Sciatic nerve (tissue), 2 donors: ENCODE measurements at regions of chr17 and their contacts with region 1.

Region 1: GRCh38 chr17:10327640-10328039 is 45.2 kb downstream of the MYH13 start:
- DNase-seq: peak; percentile 89
- ATAC-seq: peak; percentile 71

Region 2: DNA sequence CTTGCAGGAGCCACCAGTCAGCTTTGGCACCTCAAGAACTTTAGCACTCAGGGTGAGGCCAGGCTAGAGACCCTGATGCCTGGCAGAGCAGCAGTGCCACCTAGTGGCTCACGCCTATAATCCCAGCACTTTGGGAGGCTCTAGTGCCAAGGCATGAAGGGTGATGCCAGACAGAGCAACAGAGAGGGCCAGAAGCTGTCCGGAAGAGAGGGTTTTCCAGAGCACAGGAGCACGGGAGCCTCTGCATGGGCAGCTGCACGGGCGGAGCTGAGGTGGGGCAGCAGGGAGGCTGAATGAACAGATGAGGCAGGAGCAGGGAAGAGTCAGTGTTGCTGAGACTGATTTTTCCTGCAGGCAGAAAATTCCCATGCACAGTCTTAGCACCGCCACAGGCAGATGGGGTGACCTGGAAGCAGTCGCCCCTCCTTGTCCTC is 290.6 kb after region 1 on chr17:
- intact Hi-C with region 1: loop called (anchors 10 kb)
- DNase-seq: peak; percentile 80
- ATAC-seq: peak; percentile 89